ENCODE measurements at regions of chr4 and their contacts with region 1.

Region 1: GRCh38 chr4:18578307-18578706 is 556.8 kb upstream of the LCORL start:
- DNase-seq: no peak
- ATAC-seq: no peak

Region 2: DNA sequence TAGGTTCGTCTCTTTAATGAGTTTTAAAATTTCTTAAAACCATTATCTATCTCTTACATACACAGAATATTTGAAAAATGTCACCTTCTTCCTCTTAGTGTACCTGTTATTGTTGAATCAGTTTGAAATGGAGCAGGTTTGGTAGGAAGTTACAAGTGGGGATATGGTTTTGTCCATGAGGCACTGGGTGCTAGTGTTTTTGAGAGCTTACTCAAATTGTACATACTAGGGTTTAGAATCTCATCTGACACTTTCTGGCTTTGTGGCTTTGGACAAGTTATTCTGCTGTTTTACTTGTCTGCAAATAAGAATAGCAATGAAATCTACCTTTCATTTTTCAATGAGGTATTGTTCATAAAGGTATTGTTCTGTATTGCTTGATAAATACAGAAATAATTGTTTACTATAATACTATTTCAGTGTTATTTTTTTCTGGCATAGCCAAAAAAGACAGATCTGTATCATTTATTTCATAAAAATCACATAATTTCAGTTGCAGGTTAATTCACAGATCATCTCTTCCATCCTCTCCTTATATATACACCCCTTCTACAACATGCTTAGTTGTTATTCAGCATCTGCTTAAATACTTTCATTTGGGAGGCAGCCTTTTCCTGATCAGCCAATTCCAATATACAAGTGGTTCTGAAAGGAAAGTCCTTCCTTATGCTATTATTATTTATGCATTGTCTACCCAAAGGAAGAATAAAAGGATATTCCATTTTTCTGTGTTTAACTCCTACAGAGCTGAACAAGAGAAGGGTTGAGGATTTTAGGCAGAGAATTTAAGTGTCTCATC is 754.2 kb before region 1 on chr4:
- intact Hi-C with region 1: loop called in 1 of 2 experiments (anchors 10 kb)
- DNase-seq: no peak
- ATAC-seq: no peak